Posterior vena cava (tissue), 2 donors: ENCODE measurements at regions of chr10 and their contacts with region 1.

Region 1: DNA sequence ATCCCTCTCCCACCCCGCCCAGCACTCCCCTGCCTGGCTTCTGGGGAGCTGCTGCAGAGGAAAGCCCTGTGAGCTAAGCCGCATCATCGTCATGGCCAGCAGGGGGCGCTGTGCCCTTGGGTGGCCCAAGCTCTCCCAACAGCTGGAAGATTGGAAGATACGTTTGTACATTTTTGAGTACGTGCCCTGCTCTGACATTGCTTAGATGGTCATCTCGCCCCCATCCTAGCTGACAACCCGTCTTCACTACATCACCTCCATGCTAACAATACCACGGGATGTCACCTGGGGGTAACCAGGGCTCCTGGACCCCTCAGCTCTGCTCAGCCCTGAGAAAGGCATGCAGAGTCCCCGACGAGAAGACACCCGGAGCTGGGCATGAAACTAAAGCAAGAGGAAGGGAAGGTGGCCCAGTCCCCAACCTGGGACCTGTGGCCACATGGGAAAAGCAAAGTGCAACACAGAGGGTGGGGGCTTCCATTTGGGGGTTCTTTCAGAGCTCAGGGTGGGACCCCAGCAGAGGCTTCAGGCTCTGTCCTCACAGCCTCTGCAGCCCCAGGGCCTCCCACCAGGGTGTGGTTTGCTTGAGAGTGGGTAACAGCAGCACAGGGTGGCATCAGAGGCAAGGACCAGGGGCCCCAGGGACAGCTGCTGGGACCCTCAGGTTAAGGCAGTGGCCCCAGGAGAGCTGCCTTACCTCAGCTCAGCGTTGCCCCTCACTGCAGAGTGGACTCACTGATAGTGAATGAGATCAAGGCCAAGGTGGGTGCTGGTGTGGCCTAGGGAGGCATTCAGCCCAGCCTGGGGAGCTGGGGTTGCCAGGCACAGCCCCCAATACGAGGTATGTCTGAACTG is 136.7 kb downstream of the PTPN20 start:
- DNase-seq: peak; percentile 95

Region 2: DNA sequence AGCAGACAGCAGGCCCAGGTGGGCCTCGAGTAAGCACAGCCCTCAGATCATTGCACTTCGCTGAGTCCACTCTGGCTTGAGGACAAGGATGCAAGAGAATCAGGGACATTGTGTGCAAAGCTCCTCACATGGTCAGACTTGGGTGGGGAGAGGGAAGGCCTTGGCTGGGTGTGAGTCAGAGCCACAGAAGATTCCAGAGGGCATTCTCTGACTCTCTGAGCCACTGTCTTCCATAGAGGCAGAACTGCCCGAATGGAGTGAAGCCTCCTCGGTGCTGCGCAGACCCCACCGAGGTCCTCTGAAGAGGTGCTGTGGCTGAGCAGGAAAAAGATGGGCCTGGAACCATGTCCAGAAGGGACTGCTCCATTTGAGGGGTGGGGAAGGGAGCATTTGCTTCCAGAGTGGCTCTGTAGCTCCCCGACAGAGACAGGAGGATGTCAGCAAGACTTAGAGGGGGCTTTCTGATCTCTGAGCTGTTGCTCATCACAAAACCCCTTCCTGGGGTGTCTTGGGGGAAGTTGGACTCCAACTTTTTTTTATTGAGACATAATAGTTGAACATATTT is 15.9 kb before region 1 on chr10:
- intact Hi-C with region 1: loop called in 1 of 2 experiments (anchors 1 kb)
- DNase-seq: no peak

Region 3: DNA sequence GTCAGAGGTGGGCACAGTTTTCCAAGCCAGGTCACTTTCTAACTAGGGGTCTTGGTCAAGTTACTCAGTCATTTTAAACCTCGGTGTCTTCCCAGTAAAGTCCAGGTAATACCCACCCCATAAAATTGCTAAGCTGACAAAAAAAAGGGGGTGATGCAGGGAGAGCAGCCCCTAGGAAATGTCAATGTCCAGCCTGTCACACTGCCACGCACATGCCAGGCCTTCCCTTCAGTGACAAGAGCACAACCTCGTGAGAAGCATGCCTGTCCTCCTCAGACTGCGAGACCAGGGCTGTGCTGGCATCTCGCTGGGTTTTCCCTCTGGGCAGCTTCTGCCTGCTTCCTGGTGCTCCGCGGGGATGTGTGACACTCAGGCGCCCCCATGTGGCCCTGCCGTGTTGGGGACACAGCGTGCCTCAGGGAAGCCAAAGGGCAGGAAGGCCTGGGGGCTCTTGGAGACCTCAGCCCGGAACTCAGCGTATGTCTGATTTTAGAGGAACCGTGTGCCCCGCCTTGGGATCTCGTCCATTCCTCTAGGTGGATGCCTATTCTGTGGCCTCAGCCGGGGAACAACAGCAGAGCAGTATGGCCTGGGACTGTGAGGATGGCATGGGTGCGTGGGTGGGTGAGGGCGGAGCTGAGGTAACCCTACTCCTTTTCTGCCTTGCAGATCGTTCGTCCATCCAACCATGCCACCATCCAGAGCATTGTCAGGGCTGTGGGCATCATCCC is 264.2 kb after region 1 on chr10:
- intact Hi-C with region 1: loop called (anchors 2 to 5 kb)
- DNase-seq: peak; percentile 94